WTC11 (cell line): ENCODE measurements at regions of chr1 and their contacts with region 1.

Region 1: GRCh38 chr1:2586154-2587070 is at the start of gene PRXL2B:
- DNase-seq: peak; percentile 98
- ATAC-seq: peak; percentile 90
- H3K4me3 Mint-ChIP-seq: peak within 1 kb of the TSS; percentile 77
- H3K27ac Mint-ChIP-seq: peak within 1 kb of the TSS; percentile 82; the same call in 1 of the 2 replicates
- H3K4me1 Mint-ChIP-seq: peaks cover 19% of the 10 kb centered on the region
- H3K27me3 Mint-ChIP-seq: peaks cover 3% of the 10 kb centered on the region; the same call in 1 of the 2 replicates
- CTCF ChIP-seq: no peak
- total RNA-seq, gene PRXL2B: 47.8 to 51.1 TPM (median 50.3 TPM) in 3 replicates

Region 2: GRCh38 chr1:2561898-2562545 is 24.4 kb before region 1 on chr1:
- CTCF ChIA-PET with region 1: interaction called, 28 read pairs
- POLR2A ChIA-PET with region 1: interaction called, 3 read pairs
- DNase-seq: peak; percentile 56
- ATAC-seq: peak; percentile 83
- H3K4me3 Mint-ChIP-seq: no peak overlapping the region
- H3K27ac Mint-ChIP-seq: no peak overlapping the region
- H3K4me1 Mint-ChIP-seq: 0 out of 2 replicates have a peak, but pooled peaks cover 3% of the 10 kb centered on the region
- H3K27me3 Mint-ChIP-seq: no peaks in the 10 kb centered on the region
- CTCF ChIP-seq: peak; percentile 51; the same call in 1 of the 2 replicates

Region 3: DNA sequence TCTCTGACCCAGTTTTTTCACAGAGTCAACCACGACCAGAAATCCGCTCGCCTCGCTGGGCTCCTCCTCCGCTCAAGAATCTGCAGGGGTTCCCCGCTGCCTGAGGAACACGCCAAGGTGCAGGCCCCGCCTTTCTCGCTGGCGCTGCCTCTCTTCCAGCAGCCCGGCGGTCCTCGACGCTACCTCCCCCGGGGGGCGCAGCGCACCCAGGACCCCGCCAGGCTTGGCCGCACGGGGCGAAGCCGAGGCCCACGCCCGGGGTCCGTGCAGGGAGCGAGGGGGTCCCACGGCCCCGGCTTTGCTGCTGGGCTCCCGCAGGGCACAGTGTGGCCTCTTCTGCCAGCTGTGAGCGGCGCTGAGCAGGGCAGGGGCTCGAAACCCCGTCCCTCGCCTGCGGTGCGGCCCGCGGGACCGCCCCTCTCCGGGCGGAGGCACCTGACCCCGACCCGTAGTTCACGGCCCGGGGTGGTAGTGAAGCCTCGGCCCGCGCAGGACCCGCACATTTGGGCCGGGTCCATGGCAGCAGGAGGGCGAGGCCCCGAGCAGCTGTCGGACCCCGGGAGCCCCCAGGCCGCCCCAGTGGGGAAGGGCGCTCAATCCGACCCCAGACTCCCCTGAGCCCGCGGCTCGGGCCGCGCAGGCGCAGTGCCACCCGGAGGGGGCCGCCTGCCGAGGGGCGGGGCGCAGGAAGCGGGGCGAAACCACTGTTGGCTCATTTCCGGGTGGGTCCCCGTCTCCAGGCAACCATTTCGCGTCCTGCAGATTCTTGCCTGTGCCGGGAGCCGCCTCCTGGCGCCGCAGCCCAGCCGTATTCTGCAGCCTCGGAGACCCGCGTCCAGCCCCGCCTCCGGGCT is 56.4 kb after region 1 on chr1:
- CTCF ChIA-PET with region 1: no interaction called
- POLR2A ChIA-PET with region 1: no interaction called
- DNase-seq: peak; percentile 90
- ATAC-seq: peak; percentile 84
- H3K4me3 Mint-ChIP-seq: peak overlapping the region; percentile 71
- H3K27ac Mint-ChIP-seq: no peak overlapping the region
- H3K4me1 Mint-ChIP-seq: no peaks in the 10 kb centered on the region; the same call in 1 of the 2 replicates
- H3K27me3 Mint-ChIP-seq: peaks cover 21% of the 10 kb centered on the region
- CTCF ChIP-seq: no peak